ENCODE measurements at regions of chr4 and their contacts with region 1.

Region 1: DNA sequence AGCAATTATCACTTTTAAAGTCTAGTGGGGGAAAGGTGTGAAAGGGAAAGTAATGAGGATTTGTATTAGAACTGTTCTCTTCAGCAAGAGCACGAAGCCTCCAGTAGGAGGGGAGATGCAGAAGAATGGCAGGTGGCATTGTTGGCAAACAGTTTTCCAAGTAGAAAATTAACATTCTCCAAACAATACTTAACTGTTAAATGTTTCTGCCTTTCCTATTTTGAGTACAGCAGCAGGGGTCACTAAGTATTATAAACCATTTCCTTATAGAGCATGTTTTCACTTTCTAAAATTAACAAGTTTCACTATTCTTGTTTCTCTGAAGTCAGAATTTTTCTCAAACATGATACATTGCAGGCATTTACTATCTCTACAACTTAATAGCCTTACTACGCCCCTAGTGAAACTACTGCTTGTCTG is 58.7 kb downstream of the LEF1 start:
- DNase-seq: no peak
- H3K4me3 Mint-ChIP-seq: peak overlapping the region; percentile 38
- H3K27ac Mint-ChIP-seq: peak overlapping the region; percentile 57
- H3K4me1 Mint-ChIP-seq: peaks cover 80% of the 10 kb centered on the region
- H3K27me3 Mint-ChIP-seq: no peaks in the 10 kb centered on the region

Region 2: GRCh38 chr4:107913281-107913899 is 196.6 kb before region 1 on chr4:
- intact Hi-C with region 1: no loop called
- DNase-seq: no peak
- H3K4me3 Mint-ChIP-seq: no peak overlapping the region
- H3K27ac Mint-ChIP-seq: no peak overlapping the region
- H3K4me1 Mint-ChIP-seq: peaks cover 4% of the 10 kb centered on the region
- H3K27me3 Mint-ChIP-seq: peaks cover 9% of the 10 kb centered on the region

Region 3: DNA sequence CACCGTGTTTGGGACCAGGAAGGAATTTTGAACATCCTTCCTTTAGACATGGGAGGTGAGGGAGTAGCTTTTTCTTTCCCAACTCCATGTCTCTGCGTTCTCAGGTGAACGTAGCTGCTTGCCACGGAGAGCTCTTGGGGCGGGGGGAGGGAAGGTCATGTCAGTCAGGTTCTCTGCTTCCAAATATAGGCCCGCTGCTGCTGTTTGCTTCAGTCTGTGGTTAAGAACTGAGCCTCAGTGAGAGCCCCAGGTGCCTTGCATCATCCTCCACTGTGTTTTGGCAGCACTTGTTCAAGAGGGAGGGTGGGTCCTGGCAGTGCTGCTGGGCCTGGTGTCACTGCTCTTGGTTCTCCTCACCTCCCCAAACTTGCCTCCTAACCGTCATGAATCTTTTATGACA is 73.8 kb before region 1 on chr4:
- intact Hi-C with region 1: loop called (anchors 1 kb)
- DNase-seq: peak; percentile 54
- H3K4me3 Mint-ChIP-seq: no peak overlapping the region
- H3K27ac Mint-ChIP-seq: peak overlapping the region; percentile 72
- H3K4me1 Mint-ChIP-seq: peaks cover 31% of the 10 kb centered on the region
- H3K27me3 Mint-ChIP-seq: no peaks in the 10 kb centered on the region

Region 4: GRCh38 chr4:108072300-108072699 is 37.7 kb before region 1 on chr4:
- intact Hi-C with region 1: loop called (anchors 5 kb)
- DNase-seq: peak; percentile 44
- H3K4me3 Mint-ChIP-seq: no peak overlapping the region
- H3K27ac Mint-ChIP-seq: peak overlapping the region; percentile 44
- H3K4me1 Mint-ChIP-seq: peaks cover 41% of the 10 kb centered on the region
- H3K27me3 Mint-ChIP-seq: no peaks in the 10 kb centered on the region

Region 5: DNA sequence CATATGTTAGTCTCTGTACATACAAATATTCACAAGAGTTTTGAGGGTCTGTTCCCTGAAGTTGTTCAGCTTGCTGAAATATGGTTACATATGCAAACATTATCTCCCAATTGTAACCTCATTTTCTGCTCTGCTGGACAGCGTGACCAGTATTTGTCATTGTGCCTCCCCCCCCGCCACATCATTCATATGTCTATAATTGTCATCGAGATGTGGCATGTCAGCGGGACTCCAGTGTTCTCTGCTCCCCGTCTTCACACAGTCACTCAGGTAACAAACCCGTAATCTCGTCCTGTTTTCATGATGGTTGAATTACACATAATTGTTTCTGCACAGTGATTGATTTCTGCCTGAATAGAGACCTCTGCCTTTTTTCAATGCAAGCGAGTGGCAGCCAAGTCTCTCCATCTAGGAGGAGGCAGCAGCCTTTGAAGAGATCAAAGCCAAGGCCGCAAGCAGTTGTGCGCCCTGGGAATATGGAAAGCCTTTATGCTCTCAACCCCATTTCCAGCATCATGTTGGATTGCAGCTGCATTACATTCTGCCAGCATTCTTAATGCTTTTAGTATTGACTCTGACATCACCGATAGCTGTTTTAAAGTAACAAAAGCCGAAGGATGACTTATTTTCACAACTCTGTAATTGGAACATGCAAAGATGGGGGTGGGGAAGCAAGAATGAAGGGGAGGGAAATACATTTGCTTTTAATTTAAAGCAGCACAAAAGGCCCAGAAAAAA is 31.4 kb after region 1 on chr4:
- intact Hi-C with region 1: loop called (anchors 1 kb)
- DNase-seq: no peak
- H3K4me3 Mint-ChIP-seq: peak overlapping the region; percentile 72
- H3K27ac Mint-ChIP-seq: peak overlapping the region; percentile 65
- H3K4me1 Mint-ChIP-seq: peaks cover 81% of the 10 kb centered on the region
- H3K27me3 Mint-ChIP-seq: no peaks in the 10 kb centered on the region

Region 6: DNA sequence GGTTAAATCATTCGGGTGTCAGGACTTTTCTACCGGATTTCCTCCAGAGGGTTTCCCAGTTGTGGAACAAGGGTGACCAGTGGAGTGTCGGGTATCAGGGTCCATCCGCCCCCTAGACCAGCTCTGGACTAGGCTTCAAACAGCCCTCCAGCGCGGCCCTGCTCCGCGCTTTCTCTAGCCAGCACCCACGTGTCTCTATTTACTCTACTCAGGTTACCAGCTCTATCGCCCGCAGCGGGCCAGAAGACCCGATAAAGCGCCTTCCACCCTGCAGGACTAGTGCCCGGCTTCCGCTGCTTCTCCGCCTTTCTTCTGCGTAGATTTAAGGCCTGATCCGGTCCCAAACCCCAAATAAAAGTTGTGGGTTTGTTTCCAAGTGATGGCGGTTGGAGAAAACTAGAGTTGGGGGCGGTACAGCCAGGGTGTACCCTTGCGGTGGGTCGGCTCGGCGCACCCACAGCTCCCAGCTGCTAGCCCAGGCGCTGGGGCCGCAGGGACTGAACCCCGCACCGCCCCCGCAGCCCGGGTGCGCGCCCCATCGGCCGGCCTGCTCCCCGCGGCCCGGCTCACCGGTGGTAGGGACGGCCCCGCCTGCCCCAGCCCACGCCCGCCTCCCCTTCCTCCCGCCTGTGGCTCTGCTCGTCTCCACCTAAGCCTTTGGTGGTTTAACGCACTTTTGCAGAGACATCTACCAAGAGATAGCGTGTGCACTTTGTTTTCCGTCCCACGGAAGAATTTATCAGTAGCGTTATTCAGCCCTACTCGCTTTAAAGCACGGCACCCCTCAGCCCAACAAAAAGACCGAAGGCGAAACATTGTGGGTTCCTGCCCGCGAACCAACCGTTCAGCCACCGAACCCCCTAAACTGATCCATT is 56.7 kb after region 1 on chr4:
- intact Hi-C with region 1: loop called (anchors 1 kb)
- DNase-seq: peak; percentile 66
- H3K4me3 Mint-ChIP-seq: peak overlapping the region; percentile 97
- H3K27ac Mint-ChIP-seq: peak overlapping the region; percentile 94
- H3K4me1 Mint-ChIP-seq: peaks cover 55% of the 10 kb centered on the region
- H3K27me3 Mint-ChIP-seq: peaks cover 22% of the 10 kb centered on the region

Region 7: GRCh38 chr4:108425988-108426387 is 316.0 kb after region 1 on chr4:
- intact Hi-C with region 1: loop called (anchors 5 kb)
- DNase-seq: no peak
- H3K4me3 Mint-ChIP-seq: no peak overlapping the region
- H3K27ac Mint-ChIP-seq: no peak overlapping the region
- H3K4me1 Mint-ChIP-seq: peaks cover 19% of the 10 kb centered on the region
- H3K27me3 Mint-ChIP-seq: peaks cover 13% of the 10 kb centered on the region

Region 8: DNA sequence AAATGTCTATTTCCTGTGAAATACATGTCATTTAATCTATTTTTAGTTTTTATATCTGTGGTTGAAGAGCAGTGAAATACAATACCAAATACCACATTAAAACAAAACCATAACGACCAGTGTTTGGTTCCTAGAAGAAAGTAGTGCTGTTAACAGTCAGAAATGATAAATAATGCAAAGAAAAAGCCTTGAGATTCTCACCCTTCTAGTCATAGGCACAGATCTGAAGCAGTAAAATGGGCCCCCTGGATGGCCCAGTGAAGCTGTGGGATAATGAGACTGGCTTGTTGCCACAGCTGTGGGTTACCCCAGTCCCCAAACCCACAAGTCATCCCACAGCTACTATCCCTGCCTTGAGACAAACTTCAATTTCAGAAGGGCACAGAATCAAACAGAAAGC is 373.1 kb after region 1 on chr4:
- intact Hi-C with region 1: loop called (anchors 5 kb)
- DNase-seq: peak; percentile 35
- H3K4me3 Mint-ChIP-seq: peak overlapping the region; percentile 60
- H3K27ac Mint-ChIP-seq: peak overlapping the region; percentile 69
- H3K4me1 Mint-ChIP-seq: peaks cover 36% of the 10 kb centered on the region
- H3K27me3 Mint-ChIP-seq: peaks cover 4% of the 10 kb centered on the region

Measured in activated T-helper 2 cell treated with anti-CD3 and anti-CD28 coated beads, Interferon-gamma antibody, Interleukin-2, Interleukin-4, amounts not matched to agents 10 μg/mL and 5 μg/mL and 100 μg/mL, durations not matched to agents 14 hours and 24 hours and 36 hours (primary cell).